Activated T-helper 2 cell treated with anti-CD3 and anti-CD28 coated beads, Interferon-gamma antibody, Interleukin-2, Interleukin-4, amounts not matched to agents 10 μg/mL and 5 μg/mL and 100 μg/mL, durations not matched to agents 14 hours and 24 hours and 36 hours (primary cell): ENCODE measurements at regions of chr19 and their contacts with region 1.

Region 1: DNA sequence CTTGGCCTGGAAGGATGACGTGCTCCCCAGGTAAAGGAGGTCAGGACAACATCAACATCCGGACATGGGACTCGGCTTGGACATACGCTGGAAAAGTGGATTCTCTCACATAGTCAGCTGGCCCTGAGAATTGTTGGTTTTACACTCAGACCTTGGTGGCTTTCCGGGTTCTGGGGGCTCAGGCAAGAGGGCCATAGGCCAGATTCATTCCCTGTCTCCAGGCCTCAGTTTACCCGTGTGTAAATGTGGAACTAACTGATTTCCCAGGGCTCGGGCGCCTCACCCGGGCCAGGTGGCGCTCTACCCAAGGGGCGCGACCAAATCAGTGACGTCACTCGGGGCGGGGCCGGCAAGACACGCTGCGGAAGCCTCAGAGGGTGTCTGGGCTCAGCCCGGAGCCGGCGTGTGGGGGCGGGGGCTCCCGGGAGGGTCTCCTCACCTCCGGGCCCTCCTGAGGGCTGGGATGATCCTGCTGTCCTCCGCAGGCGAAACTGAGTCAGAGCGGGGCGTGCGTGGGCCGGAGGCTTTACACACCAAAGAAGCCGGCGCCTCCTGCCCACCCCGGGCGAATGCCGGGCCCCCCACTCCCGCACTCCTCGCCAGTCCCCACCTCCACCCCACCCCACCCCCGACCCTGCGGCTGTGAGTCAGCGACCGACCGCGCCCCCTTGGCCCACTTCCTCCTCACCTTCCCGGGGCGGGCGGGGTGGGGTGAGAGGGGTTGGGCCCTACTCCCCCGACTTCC is 861 bp upstream of the VASP start:
- DNase-seq: peak; percentile 95
- H3K4me3 Mint-ChIP-seq: peak overlapping the region; percentile 93
- H3K27ac Mint-ChIP-seq: peak overlapping the region; percentile 95
- H3K4me1 Mint-ChIP-seq: peaks cover 27% of the 10 kb centered on the region
- H3K27me3 Mint-ChIP-seq: no peaks in the 10 kb centered on the region

Region 2: DNA sequence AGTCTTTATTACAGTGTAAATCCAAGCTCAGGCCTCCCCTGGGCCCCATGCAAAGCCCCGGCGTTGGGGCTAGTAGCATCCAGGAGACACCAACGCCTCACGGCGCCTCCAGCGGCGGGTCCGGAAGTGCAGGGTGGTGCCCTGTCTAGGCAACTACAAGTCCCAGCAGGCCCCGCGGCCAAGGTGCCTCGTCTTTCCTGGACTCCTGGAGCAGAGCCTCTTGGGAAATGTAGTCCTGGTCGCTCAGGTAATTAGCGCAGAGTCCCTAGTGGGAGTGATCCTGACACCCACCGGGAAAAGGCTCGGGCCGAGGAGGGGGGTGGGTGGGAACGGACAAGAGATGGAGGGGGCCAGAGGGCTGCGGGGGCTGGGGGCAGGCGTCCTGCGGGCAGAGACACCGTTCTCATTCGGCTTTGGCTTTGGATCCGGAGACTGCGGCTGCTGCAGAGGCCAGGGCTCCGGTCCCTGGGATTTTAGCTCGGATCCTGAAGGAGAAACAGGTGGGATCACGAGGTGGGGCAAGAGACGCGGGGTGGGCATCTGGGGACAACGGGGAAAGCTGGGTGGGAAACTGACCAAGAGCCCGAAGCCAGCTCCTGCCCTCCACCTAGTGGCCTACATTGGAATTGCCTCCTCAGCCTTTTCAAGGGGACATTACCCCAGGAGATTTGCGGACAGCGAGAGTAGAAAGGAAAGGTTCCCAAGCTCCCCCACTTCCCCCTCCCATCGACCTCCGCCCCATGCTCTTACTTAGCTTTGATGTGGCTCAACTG is 20.9 kb before region 1 on chr19:
- intact Hi-C with region 1: loop called (anchors 2 kb)
- DNase-seq: peak; percentile 95
- H3K4me3 Mint-ChIP-seq: peak overlapping the region; percentile 88
- H3K27ac Mint-ChIP-seq: peak overlapping the region; percentile 72
- H3K4me1 Mint-ChIP-seq: peaks cover 10% of the 10 kb centered on the region
- H3K27me3 Mint-ChIP-seq: peaks cover 2% of the 10 kb centered on the region

Region 3: GRCh38 chr19:45492627-45493470 is 13.6 kb before region 1 on chr19:
- intact Hi-C with region 1: loop called (anchors 1 kb)
- DNase-seq: no peak
- H3K4me3 Mint-ChIP-seq: peak overlapping the region; percentile 76
- H3K27ac Mint-ChIP-seq: peak overlapping the region; percentile 39
- H3K4me1 Mint-ChIP-seq: peaks cover 24% of the 10 kb centered on the region
- H3K27me3 Mint-ChIP-seq: peaks cover 15% of the 10 kb centered on the region

Region 4: DNA sequence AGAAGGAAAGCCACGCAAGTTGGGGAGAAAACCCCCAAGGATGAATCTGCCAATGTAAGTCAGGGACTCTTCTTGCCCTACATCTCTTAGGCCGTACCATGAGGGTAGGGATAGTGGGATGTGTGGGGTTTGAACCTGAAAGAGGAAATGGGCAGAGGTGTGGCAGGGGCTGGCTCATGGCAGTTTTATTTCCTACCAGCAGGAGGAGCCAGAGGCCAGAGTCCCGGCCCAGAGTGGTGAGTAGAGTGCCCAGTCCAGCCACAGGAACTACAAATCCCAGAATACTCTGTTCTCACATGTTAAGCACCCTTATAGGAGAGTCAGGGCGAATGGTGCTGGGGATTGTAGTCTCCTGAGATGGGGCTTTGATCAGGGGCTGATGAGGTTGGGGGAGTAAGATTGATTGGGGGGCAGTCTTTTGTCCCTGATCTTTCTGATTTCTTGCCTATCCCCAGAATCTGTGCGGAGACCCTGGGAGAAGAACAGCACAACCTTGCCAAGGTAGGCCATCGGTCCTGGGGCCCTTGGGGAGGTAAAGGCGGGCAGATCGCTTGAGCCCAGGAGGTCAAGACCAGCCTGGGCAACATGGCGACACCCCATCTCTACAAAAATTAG is 17.3 kb after region 1 on chr19:
- intact Hi-C with region 1: loop called (anchors 2 kb)
- DNase-seq: peak; percentile 69
- H3K4me3 Mint-ChIP-seq: no peak overlapping the region
- H3K27ac Mint-ChIP-seq: peak overlapping the region; percentile 24
- H3K4me1 Mint-ChIP-seq: peaks cover 16% of the 10 kb centered on the region
- H3K27me3 Mint-ChIP-seq: no peaks in the 10 kb centered on the region

Region 5: DNA sequence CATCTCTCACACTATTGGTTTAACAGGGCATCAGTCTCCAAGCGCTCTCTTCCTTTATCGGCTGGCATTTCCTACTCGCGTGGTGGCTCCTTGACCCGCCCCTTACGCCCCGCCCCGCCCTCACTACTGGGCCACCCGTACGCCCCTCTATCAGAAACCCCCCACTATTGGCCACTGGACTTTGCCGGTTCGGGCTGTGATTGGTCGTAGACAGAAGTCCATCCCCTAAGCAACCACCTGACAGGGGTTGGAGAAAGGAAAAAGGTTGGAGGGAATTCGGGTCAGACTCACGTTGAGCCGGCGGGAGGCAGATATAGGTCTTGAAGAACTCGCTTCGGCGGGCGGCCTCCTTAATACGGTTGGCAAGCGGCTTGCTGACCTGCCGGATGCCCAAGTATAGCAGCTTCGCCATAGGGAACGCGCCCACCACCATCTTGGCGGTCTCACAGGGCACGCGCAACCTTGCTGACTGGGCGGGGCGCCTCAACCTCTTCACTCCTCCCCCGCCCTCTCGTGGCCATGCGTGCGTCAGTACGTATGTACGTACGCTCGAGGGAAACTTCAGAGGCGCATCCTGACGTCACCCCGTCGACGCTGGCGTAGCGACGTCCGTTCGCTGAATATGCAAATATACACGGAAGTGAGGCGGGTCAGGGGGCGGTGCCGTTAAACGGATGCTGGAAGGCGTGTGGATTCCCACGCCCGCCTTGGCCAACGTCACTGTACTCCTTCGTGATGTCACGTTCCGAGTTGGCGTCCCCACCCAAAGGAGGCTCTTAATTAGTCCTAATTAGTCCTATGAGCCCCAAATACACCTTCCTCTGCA is 78.1 kb after region 1 on chr19 and contains the start of gene OPA3:
- intact Hi-C with region 1: loop called (anchors 5 kb)
- DNase-seq: peak; percentile 98
- H3K4me3 Mint-ChIP-seq: peak within 1 kb of the TSS; percentile 89
- H3K27ac Mint-ChIP-seq: peak within 1 kb of the TSS; percentile 97
- H3K4me1 Mint-ChIP-seq: peaks cover 9% of the 10 kb centered on the region
- H3K27me3 Mint-ChIP-seq: peaks cover under 1% of the 10 kb centered on the region
- total RNA-seq, gene OPA3: 15.2 and 15.9 TPM in 2 replicates

Region 6: GRCh38 chr19:45657520-45658167 is 151.2 kb after region 1 on chr19:
- intact Hi-C with region 1: no loop called
- DNase-seq: no peak
- H3K4me3 Mint-ChIP-seq: no peak overlapping the region
- H3K27ac Mint-ChIP-seq: no peak overlapping the region
- H3K4me1 Mint-ChIP-seq: no peaks in the 10 kb centered on the region
- H3K27me3 Mint-ChIP-seq: peaks cover 9% of the 10 kb centered on the region